Transverse colon (tissue), 4 donors: ENCODE measurements at regions of chr12 and their contacts with region 1.

Region 1: DNA sequence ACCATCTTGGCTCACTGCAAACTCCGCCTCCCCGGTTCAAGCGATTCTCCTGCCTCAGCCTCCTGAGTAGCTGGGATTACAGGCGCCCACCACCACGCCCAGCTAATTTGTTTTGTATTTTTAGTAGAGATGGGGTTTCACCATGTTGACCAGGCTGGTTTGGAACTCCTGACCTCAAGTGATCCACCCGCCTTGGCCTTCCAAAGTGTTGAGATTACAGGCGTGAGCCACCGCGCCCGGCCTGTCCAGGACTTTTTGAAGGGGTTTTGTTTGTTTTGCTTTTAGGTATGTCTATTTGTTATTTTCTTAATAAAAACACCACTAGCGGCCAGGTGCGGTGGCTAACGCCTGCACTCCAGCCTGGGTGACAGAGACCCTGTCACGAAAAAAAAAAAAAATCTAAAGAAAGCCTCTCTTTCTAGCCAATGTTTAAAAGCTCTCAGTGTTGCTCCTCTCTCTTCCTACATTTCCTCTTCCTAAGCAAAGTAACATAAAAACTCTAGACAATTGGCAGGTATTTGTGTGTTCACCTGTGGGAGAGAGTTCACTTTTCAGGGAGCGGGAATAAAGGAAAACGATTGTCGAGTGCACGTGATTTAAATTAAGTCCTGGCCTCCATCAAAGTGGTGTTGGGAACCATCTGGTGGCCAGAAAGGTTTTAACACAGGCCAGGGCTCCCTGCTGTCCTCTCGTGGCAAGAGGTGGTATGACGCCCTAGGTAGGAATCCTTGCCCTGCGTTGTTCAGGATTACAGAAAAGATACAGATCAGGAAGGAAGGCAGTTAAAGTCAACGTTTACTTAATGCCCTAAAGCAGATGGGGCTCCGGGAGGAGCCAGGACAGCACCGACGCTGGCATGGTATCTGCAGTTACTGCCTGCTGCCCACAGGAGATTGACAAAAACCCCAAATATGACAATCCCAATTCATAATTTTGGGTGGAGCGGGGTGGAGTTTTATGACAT is 36.2 kb upstream of the ATP23 start:
- DNase-seq: peak; percentile 94
- H3K4me3 ChIP-seq: peak overlapping the region in 1 of 4 donors; percentile 9
- H3K27ac ChIP-seq: peak overlapping the region; percentile 35 to 40 (median 38)
- H3K4me1 ChIP-seq: peaks cover 6 to 14% (median 13%) of the 10 kb centered on the region in 4 donors
- H3K27me3 ChIP-seq: no peaks in the 10 kb centered on the region
- CTCF ChIP-seq: peak; percentile 100
- EP300 ChIP-seq: no peak
- POLR2A ChIP-seq: no peak

Region 2: GRCh38 chr12:57782608-57783465 is 122.3 kb before region 1 on chr12 and contains the start of gene TSFM:
- in situ Hi-C with region 1: no loop called
- intact Hi-C with region 1: loop called (anchors 1 kb)
- DNase-seq: peak; percentile 97
- H3K4me3 ChIP-seq: peak within 1 kb of the TSS; percentile 77 to 98 (median 87)
- H3K27ac ChIP-seq: peak within 1 kb of the TSS; percentile 76 to 84 (median 79)
- H3K4me1 ChIP-seq: peaks cover 11 to 21% (median 14%) of the 10 kb centered on the region in 4 donors
- H3K27me3 ChIP-seq: no peaks in the 10 kb centered on the region
- CTCF ChIP-seq: peak; percentile 90 to 95 (median 95)
- EP300 ChIP-seq: no peak
- POLR2A ChIP-seq: peak; percentile 70
- total RNA-seq, gene TSFM: 1.4 to 23.2 (median 18.9) TPM

Region 3: DNA sequence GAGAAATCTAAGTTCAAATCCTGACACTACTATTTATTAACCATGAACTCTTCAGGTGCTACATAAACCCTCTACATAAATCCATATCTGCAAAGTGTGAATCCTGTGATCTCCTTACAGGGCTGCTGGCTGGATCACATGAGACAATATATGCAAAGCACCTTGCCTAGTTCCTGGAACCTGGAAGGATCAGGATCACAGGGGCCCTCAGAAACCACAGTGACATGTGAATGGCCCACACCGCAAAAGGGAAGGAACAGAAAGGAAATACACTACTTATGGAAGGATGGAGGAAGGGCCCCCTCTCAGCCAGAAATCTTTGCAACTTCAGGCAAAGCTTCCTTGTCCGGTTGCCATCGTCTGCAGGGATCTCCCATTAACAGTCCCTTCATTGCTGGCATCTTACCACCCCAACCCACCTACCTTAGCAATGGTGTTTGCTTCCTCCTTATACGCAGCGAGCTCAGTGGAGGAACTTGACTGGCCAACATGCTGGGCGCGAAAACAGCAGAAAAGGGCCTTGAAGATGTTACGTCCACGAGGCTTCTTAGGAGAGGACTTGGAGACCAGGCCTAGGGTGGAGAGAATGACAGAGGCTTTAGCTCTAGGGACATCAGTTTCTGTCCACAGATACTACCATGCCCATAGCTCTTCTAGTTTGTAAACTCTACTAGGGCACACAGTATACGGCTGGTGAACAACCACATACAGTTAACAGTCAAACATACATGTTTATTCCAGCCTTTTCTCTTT is 75.9 kb before region 1 on chr12:
- in situ Hi-C with region 1: loop called (anchors 5 to 10 kb)
- intact Hi-C with region 1: loop called (anchors 2 kb)
- DNase-seq: no peak
- H3K4me3 ChIP-seq: no peak overlapping the region
- H3K27ac ChIP-seq: peak overlapping the region in 1 of 4 donors; percentile 85
- H3K4me1 ChIP-seq: peaks cover 33 to 55% (median 41%) of the 10 kb centered on the region in 4 donors
- H3K27me3 ChIP-seq: no peaks in the 10 kb centered on the region
- CTCF ChIP-seq: no peak
- EP300 ChIP-seq: no peak
- POLR2A ChIP-seq: no peak

Region 4: DNA sequence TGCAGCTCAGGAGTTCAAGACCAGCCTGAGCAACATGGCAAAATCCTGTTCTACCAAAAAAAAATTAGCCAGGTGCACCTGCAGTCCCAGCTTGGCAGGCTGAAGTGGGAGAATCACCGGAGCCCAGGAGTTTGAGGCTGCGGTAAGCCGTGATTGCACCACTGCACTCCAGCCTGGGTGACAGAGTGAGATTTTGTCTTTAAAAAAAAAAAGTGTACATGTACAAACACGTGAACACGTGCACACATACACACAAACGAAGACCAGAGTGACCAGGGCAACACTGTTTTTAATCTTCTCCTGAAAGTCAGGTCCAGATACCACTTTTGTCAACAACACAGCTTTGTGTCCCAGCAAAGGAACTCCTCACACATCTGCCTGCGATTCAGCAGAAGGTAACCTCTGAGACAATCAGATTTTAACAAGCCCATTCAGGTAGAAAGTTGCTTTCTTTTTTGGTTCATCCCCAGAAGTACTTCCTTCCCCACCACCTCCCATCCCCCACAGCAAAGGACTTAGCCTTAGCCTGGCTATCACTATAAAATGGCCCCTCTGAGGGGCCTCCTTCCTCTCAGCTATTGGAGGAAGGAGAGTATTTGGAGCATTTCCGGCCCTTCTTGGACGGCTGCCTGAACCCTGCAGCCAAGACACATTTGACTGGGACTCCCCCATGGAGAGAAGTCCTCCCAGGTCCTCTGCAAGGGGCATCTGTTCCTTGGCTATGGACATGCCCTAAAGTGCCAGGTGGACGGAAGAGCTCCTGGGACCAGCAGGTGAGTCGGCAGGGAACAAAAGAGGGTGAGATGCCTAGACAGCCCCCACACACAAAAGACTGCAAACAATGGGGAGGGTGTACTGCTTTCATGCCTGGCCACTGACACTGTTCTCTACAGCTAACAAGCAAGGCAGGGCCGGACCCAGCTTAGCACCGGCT is 68.4 kb before region 1 on chr12:
- in situ Hi-C with region 1: loop called in 2 of 4 experiments (anchors 5 to 10 kb)
- intact Hi-C with region 1: loop called (anchors 2 kb)
- DNase-seq: peak; percentile 71
- H3K4me3 ChIP-seq: peak overlapping the region in 1 of 4 donors; percentile 13
- H3K27ac ChIP-seq: peak overlapping the region; percentile 69 to 98 (median 90)
- H3K4me1 ChIP-seq: peaks cover 96 to 100% (median 98%) of the 10 kb centered on the region in 4 donors
- H3K27me3 ChIP-seq: no peaks in the 10 kb centered on the region
- CTCF ChIP-seq: no peak
- EP300 ChIP-seq: no peak
- POLR2A ChIP-seq: no peak

Region 5: DNA sequence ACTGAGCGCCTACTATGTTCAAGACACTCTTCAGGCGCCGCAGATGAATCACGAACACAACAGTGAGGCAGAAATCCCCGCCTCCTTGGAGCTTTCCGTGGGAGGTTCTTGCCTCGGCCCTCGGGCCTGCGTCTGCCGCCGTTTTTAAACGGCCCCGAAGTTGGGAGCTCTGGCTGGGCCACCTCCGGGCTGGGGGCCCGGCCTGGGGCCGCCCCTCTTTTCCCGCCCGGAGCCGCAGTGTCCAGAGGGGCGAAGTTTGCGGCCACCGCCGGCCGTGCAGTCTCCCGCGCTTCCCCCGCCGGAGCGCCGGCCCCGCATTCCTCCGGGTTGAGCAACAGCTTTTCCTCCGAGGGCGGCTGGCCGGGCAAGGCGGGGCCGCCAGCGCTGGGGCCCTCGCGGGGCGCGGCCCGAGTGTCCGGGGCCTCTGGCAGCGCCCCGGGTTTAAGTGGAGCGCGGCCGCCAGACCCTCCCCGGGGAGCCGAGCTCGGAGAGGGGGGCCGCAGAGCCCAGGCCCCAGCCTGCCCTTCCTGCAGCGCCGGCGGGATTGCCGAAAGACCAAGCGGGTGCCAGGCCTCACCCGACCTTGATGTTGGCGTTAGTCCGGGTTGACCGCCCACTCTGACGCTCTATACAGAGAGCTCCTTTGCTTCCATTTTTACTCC is 39.9 kb before region 1 on chr12:
- in situ Hi-C with region 1: no loop called
- intact Hi-C with region 1: no loop called
- DNase-seq: peak; percentile 82
- H3K4me3 ChIP-seq: peak overlapping the region; percentile 51 to 70 (median 62)
- H3K27ac ChIP-seq: peak overlapping the region; percentile 90 to 98 (median 96)
- H3K4me1 ChIP-seq: peaks cover 9 to 40% (median 19%) of the 10 kb centered on the region in 4 donors
- H3K27me3 ChIP-seq: no peaks in the 10 kb centered on the region
- CTCF ChIP-seq: no peak
- EP300 ChIP-seq: no peak
- POLR2A ChIP-seq: peak; percentile 69